Gastrocnemius medialis (tissue), 4 donors: ENCODE measurements at regions of chr9 and their contacts with region 1.

Region 1: DNA sequence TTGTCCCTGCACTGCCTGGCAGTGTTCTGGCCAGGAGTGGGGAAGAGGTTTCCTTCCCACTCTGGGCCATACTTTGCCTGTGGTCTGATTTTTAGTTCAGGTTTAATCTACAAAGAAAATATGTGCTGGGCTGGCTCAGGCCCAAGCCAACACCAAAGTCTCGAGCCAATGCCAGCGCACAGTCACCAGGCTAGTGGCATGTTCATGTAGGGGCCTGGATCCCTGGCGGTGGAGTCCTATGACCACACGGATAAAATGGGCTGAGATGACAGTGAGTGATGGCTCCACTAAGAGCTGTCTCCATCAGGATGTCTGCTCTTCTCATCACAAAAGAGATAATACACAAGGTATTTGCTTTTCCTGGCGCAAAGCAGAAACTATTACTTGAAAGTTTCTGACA is 92.8 kb upstream of the PTPN3 start:
- DNase-seq: no peak
- ATAC-seq: no peak
- H3K4me3 ChIP-seq: no peak overlapping the region
- H3K27ac ChIP-seq: no peak overlapping the region
- H3K4me1 ChIP-seq: no peaks in the 10 kb centered on the region
- H3K27me3 ChIP-seq: no peaks in the 10 kb centered on the region
- CTCF ChIP-seq: no peak
- POLR2A ChIP-seq: no peak

Region 2: GRCh38 chr9:109469646-109470358 is 121.1 kb before region 1 on chr9:
- in situ Hi-C with region 1: no loop called
- intact Hi-C with region 1: no loop called
- DNase-seq: peak; percentile 59 to 82
- ATAC-seq: peak; percentile 79 to 87
- H3K4me3 ChIP-seq: no peak overlapping the region
- H3K27ac ChIP-seq: peak overlapping the region; percentile 79 to 91 (median 84)
- H3K4me1 ChIP-seq: peaks cover 54% of the 10 kb centered on the region in 2 donors
- H3K27me3 ChIP-seq: no peaks in the 10 kb centered on the region
- CTCF ChIP-seq: peak; percentile 84 to 94 (median 92)
- POLR2A ChIP-seq: no peak

Region 3: GRCh38 chr9:109817846-109818472 is 227.0 kb after region 1 on chr9:
- in situ Hi-C with region 1: loop called in 1 of 4 experiments (anchors 25 kb)
- intact Hi-C with region 1: no loop called
- DNase-seq: peak; percentile 30 to 57
- ATAC-seq: peak; percentile 74 to 86
- H3K4me3 ChIP-seq: no peak overlapping the region
- H3K27ac ChIP-seq: peak overlapping the region in 1 of 4 donors; percentile 1
- H3K4me1 ChIP-seq: peaks cover 7 to 10% of the 10 kb centered on the region in 2 donors
- H3K27me3 ChIP-seq: no peaks in the 10 kb centered on the region
- CTCF ChIP-seq: peak; percentile 63 to 85 (median 73)
- POLR2A ChIP-seq: no peak

Region 4: GRCh38 chr9:109880277-109881169 is 289.6 kb after region 1 on chr9:
- in situ Hi-C with region 1: loop called in 1 of 4 experiments (anchors 25 kb)
- intact Hi-C with region 1: no loop called
- DNase-seq: no peak
- ATAC-seq: no peak
- H3K4me3 ChIP-seq: no peak overlapping the region
- H3K27ac ChIP-seq: no peak overlapping the region
- H3K4me1 ChIP-seq: peaks cover 0 to under 1% of the 10 kb centered on the region in 2 donors
- H3K27me3 ChIP-seq: no peaks in the 10 kb centered on the region
- CTCF ChIP-seq: peak in 4 of 5 experiments; percentile 14 to 53 (median 36)
- POLR2A ChIP-seq: no peak

Region 5: DNA sequence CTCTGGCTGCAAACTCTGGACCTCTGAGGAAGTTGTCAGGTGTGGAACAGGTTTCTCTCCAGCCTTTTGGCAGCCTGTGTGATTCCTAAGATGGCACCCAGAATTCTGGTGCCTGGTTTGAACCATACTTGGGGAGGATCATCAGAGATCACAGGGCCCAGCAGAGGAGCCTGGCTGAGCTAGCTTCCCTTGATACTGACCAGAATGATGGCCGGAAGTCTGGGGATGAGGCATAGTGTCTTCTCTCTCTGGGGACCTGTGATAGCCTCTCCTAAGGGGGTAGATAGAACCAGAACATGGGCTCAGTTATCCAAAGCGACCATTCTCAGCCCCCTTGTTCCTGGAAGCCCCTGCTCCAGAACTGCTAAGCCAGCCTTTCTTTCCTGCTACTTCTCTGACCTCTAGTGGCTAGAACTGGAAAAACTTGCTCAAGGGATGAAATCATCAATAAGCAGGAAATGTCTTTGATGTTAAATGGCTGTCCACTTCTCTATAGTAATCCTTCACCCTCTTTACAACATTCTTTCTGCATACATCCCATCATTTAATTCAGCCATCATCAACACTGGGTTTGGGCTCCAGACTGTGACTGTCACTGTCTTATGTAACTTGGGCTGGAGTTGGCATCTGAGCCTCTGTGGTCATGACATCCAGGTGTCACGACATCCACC is 561.9 kb after region 1 on chr9:
- in situ Hi-C with region 1: loop called in 1 of 4 experiments (anchors 25 kb)
- intact Hi-C with region 1: no loop called
- DNase-seq: no peak
- ATAC-seq: no peak
- H3K4me3 ChIP-seq: no peak overlapping the region
- H3K27ac ChIP-seq: peak overlapping the region in 2 of 4 donors; percentile 22 to 29
- H3K4me1 ChIP-seq: peaks cover 13 to 16% of the 10 kb centered on the region in 2 donors
- H3K27me3 ChIP-seq: no peaks in the 10 kb centered on the region
- CTCF ChIP-seq: peak; percentile 53 to 71 (median 62)
- POLR2A ChIP-seq: no peak

Region 6: GRCh38 chr9:110217656-110218099 is 626.7 kb after region 1 on chr9:
- in situ Hi-C with region 1: loop called in 1 of 4 experiments (anchors 25 kb)
- intact Hi-C with region 1: no loop called
- DNase-seq: no peak
- ATAC-seq: no peak
- H3K4me3 ChIP-seq: no peak overlapping the region
- H3K27ac ChIP-seq: no peak overlapping the region
- H3K4me1 ChIP-seq: no peaks in the 10 kb centered on the region
- H3K27me3 ChIP-seq: no peaks in the 10 kb centered on the region
- CTCF ChIP-seq: peak; percentile 42 to 78 (median 66)
- POLR2A ChIP-seq: no peak